ENCODE measurements at regions of chr3 and their contacts with region 1.

Region 1: DNA sequence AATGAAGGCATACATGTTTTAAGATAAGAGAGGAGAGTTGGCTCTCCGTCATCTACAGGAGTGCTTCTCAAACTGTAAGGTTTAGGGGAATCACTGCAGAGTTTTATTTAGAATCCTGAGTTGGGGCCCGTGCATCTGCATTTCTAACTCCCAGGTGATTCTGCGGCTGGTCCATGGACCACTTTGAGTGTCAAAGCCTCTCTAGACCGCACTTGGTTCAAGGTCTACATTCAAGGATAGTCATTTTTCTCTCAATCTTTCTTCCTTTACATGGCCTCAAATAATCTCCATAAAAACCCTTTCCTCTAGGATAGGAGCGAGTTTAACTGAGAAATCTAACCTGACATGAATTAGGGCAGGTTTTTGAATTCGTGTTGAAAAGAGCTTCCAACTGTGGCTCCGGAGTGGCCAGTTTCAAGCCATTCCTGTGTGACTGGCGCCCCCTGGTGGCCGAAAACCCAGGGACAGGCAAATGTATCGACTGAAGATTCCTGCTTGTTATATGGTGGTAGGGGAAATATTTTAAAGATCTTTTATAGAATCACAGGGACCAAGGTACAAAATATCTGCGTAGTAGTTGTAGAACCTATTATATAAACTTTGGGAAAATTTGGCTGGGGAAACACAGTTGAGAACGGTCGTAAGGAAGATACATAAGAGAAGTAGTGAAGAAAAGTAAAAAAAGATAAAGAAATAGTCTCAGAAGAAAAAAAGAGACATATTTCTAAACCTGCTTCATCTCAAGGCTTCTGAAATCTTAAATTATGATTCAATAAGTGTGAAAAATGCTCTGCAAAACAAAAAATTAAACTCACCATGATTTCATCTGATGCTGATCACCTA is 11.9 kb downstream of the GABRR3 start:
- DNase-seq: peak; percentile 81 to 98 (median 90)
- ATAC-seq: peak; percentile 75
- H3K4me3 ChIP-seq: no peak overlapping the region
- H3K4me3 Mint-ChIP-seq: no peak overlapping the region
- H3K27ac ChIP-seq: no peak overlapping the region
- H3K27ac Mint-ChIP-seq: no peak overlapping the region
- H3K4me1 ChIP-seq: peaks cover 2% of the 10 kb centered on the region
- H3K4me1 Mint-ChIP-seq: peaks cover 14% of the 10 kb centered on the region
- H3K27me3 ChIP-seq: no peaks in the 10 kb centered on the region
- H3K27me3 Mint-ChIP-seq: peaks cover 3% of the 10 kb centered on the region
- CTCF ChIP-seq: peak; percentile 98

Region 2: GRCh38 chr3:96863129-96863740 is 1160.0 kb before region 1 on chr3:
- CTCF ChIA-PET with region 1: no interaction called
- POLR2A ChIA-PET with region 1: no interaction called
- intact Hi-C with region 1: loop called in 1 of 2 experiments (anchors 5 kb)
- DNase-seq: peak in 2 of 14 experiments; percentile 1 to 9
- ATAC-seq: no peak
- H3K4me3 ChIP-seq: no peak overlapping the region
- H3K4me3 Mint-ChIP-seq: no peak overlapping the region
- H3K27ac ChIP-seq: no peak overlapping the region
- H3K27ac Mint-ChIP-seq: no peak overlapping the region
- H3K4me1 ChIP-seq: no peaks in the 10 kb centered on the region
- H3K4me1 Mint-ChIP-seq: no peaks in the 10 kb centered on the region
- H3K27me3 ChIP-seq: no peaks in the 10 kb centered on the region
- H3K27me3 Mint-ChIP-seq: no peaks in the 10 kb centered on the region
- CTCF ChIP-seq: no peak

Region 3: GRCh38 chr3:97793420-97794019 is 229.7 kb before region 1 on chr3:
- CTCF ChIA-PET with region 1: interaction called, 14 read pairs
- POLR2A ChIA-PET with region 1: interaction called, 3 read pairs
- intact Hi-C with region 1: loop called (anchors 1 kb)
- DNase-seq: peak in 4 of 14 experiments; percentile 24 to 80 (median 75)
- ATAC-seq: peak; percentile 58
- H3K4me3 ChIP-seq: no peak overlapping the region
- H3K4me3 Mint-ChIP-seq: no peak overlapping the region
- H3K27ac ChIP-seq: no peak overlapping the region
- H3K27ac Mint-ChIP-seq: no peak overlapping the region
- H3K4me1 ChIP-seq: no peaks in the 10 kb centered on the region
- H3K4me1 Mint-ChIP-seq: no peaks in the 10 kb centered on the region
- H3K27me3 ChIP-seq: no peaks in the 10 kb centered on the region
- H3K27me3 Mint-ChIP-seq: no peaks in the 10 kb centered on the region
- CTCF ChIP-seq: peak; percentile 89

Region 4: GRCh38 chr3:97882975-97883598 is 140.1 kb before region 1 on chr3:
- CTCF ChIA-PET with region 1: no interaction called
- POLR2A ChIA-PET with region 1: no interaction called
- intact Hi-C with region 1: loop called in 1 of 2 experiments (anchors 10 kb)
- DNase-seq: peak in 5 of 14 experiments; percentile 2 to 43 (median 31)
- ATAC-seq: no peak
- H3K4me3 ChIP-seq: no peak overlapping the region
- H3K4me3 Mint-ChIP-seq: no peak overlapping the region
- H3K27ac ChIP-seq: no peak overlapping the region
- H3K27ac Mint-ChIP-seq: no peak overlapping the region
- H3K4me1 ChIP-seq: peaks cover 6% of the 10 kb centered on the region
- H3K4me1 Mint-ChIP-seq: peaks cover 14% of the 10 kb centered on the region
- H3K27me3 ChIP-seq: no peaks in the 10 kb centered on the region
- H3K27me3 Mint-ChIP-seq: no peaks in the 10 kb centered on the region
- CTCF ChIP-seq: no peak

Region 5: GRCh38 chr3:97940034-97940433 is 83.2 kb before region 1 on chr3:
- CTCF ChIA-PET with region 1: no interaction called
- POLR2A ChIA-PET with region 1: no interaction called
- intact Hi-C with region 1: loop called in 1 of 2 experiments (anchors 5 kb)
- DNase-seq: peak in 4 of 14 experiments; percentile 7 to 53 (median 42)
- ATAC-seq: peak; percentile 59
- H3K4me3 ChIP-seq: no peak overlapping the region
- H3K4me3 Mint-ChIP-seq: no peak overlapping the region
- H3K27ac ChIP-seq: no peak overlapping the region
- H3K27ac Mint-ChIP-seq: no peak overlapping the region
- H3K4me1 ChIP-seq: no peaks in the 10 kb centered on the region
- H3K4me1 Mint-ChIP-seq: no peaks in the 10 kb centered on the region
- H3K27me3 ChIP-seq: no peaks in the 10 kb centered on the region
- H3K27me3 Mint-ChIP-seq: no peaks in the 10 kb centered on the region
- CTCF ChIP-seq: no peak

Region 6: DNA sequence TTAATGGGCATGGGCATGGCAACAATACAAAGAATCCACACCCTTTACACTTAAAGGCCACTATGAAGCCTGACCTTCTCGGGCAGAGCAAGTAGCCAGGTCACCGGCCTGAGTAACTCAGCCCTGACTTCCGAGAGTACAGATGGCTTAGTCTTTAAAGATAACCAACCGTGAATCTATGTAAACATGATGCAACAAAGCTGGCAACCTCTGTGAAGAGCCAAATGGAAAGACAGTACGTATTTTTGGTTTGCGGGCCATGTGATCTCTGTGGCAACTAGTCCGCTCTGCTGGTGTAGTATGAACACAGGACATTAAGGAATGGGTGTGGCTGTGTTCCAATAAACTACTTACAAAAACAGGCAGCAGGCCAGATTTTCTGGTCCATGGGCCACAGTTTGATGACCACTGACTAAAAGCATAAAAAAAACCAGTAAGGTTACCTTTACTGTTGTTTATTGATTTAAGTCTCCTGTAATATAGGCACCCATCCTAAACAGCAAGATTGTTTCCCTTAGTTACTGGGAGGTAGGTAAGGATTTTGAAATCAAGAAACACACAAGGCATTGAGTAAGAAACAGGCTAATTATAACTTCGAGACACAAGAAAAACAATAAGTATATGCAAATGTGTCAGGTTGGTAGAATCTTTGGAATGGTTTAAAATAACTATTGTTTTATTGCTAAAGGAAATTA is 65.4 kb before region 1 on chr3:
- CTCF ChIA-PET with region 1: no interaction called
- POLR2A ChIA-PET with region 1: no interaction called
- intact Hi-C with region 1: no loop called
- DNase-seq: no peak
- ATAC-seq: no peak
- H3K4me3 ChIP-seq: no peak overlapping the region
- H3K4me3 Mint-ChIP-seq: no peak overlapping the region
- H3K27ac ChIP-seq: no peak overlapping the region
- H3K27ac Mint-ChIP-seq: no peak overlapping the region
- H3K4me1 ChIP-seq: peaks cover 4% of the 10 kb centered on the region
- H3K4me1 Mint-ChIP-seq: peaks cover 17% of the 10 kb centered on the region
- H3K27me3 ChIP-seq: no peaks in the 10 kb centered on the region
- H3K27me3 Mint-ChIP-seq: no peaks in the 10 kb centered on the region
- CTCF ChIP-seq: no peak

Region 7: GRCh38 chr3:98058244-98058960 is 35.2 kb after region 1 on chr3:
- CTCF ChIA-PET with region 1: no interaction called
- POLR2A ChIA-PET with region 1: no interaction called
- intact Hi-C with region 1: no loop called
- DNase-seq: no peak
- ATAC-seq: no peak
- H3K4me3 ChIP-seq: no peak overlapping the region
- H3K4me3 Mint-ChIP-seq: no peak overlapping the region
- H3K27ac ChIP-seq: no peak overlapping the region
- H3K27ac Mint-ChIP-seq: no peak overlapping the region
- H3K4me1 ChIP-seq: no peaks in the 10 kb centered on the region
- H3K4me1 Mint-ChIP-seq: no peaks in the 10 kb centered on the region
- H3K27me3 ChIP-seq: peaks cover 0 to 3% of the 10 kb centered on the region in 2 experiments
- H3K27me3 Mint-ChIP-seq: peaks cover 12% of the 10 kb centered on the region
- CTCF ChIP-seq: no peak

Measured in CD4-positive, alpha-beta T cell (primary cell).